ENCODE measurements at regions of chr11 and their contacts with region 1.

Region 1: GRCh38 chr11:67312187-67313103 is 9.1 kb downstream of the SSH3 start:
- DNase-seq: peak in 1 of 3 donors; percentile 52
- ATAC-seq: peak in 1 of 4 donors; percentile 7
- H3K4me3 ChIP-seq: no peak overlapping the region
- H3K27ac ChIP-seq: no peak overlapping the region
- H3K4me1 ChIP-seq: no peaks in the 10 kb centered on the region
- H3K27me3 ChIP-seq: no peaks in the 10 kb centered on the region
- CTCF ChIP-seq: no peak
- POLR2A ChIP-seq: no peak

Region 2: GRCh38 chr11:67262731-67263675 is 49.4 kb before region 1 on chr11:
- intact Hi-C with region 1: loop called in 1 of 2 experiments (anchors 5 kb)
- DNase-seq: peak; percentile 83 to 85 (median 85)
- ATAC-seq: peak; percentile 64 to 69 (median 66)
- H3K4me3 ChIP-seq: no peak overlapping the region
- H3K27ac ChIP-seq: peak overlapping the region in 1 of 3 donors; percentile 40
- H3K4me1 ChIP-seq: peaks cover 0 to 40% (median 8%) of the 10 kb centered on the region in 4 donors
- H3K27me3 ChIP-seq: no peaks in the 10 kb centered on the region
- CTCF ChIP-seq: peak; percentile 78 to 88 (median 82)
- POLR2A ChIP-seq: no peak